ENCODE measurements at regions of chr22 and their contacts with region 1.

Region 1: DNA sequence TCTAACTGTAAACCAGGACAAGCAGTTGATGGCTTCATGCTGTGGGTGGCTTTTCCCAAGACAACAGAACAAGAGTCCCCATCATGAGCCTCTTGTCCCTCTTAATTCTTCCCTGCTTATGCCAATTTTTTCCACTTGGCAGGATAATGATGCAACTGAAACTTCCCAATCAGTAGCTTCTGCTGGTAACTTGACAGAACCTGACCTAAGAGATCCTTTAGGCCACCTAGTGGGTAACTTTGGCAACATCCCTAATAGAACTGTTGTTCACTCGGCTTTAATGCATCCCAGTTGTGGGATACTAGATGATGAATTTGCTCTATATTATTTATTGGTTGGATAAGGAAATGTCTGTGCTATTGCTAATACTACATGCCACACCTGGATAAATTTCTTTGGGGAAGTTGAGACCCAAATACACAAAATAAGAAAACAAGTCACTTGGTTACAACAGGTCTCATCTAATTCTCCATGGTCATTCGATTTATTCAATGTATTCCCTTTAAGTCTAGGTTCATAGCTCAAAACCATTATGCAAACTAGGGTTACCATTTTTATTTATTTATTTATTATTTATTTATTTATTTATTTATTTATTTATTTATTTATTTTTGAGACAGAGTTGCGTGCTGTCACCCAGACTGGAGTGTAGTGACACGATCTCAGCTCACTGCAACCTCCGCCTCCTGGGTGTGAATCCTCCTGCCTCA is 41.4 kb upstream of the NFAM1 start:
- DNase-seq: no peak
- H3K4me3 ChIP-seq: no peak overlapping the region
- H3K27ac ChIP-seq: no peak overlapping the region
- H3K4me1 ChIP-seq: 0 out of 7 replicates have a peak, but pooled peaks cover 0 to 1% (median 0%) of the 10 kb centered on the region in 4 experiments
- H3K27me3 ChIP-seq: no peaks in the 10 kb centered on the region
- CTCF ChIP-seq: peak in 2 of 3 experiments; percentile 64 to 77; a peak in 3 of 4 replicates
- EP300 ChIP-seq: 0 out of 3 replicates have a peak, but pooled peaks of 1 of the 2 experiments have one; percentile 7
- POLR2A ChIP-seq: no peak
- RAD21 ChIP-seq: peak; percentile 64 to 72

Region 2: GRCh38 chr22:42462016-42462415 is 11.6 kb before region 1 on chr22:
- CTCF ChIA-PET with region 1: interaction called, 30 read pairs
- POLR2A ChIA-PET with region 1: no interaction called
- DNase-seq: no peak
- H3K4me3 ChIP-seq: no peak overlapping the region
- H3K27ac ChIP-seq: no peak overlapping the region
- H3K4me1 ChIP-seq: peaks cover 4 to 13% (median 8%) of the 10 kb centered on the region in 4 experiments; a peak in 6 of 7 replicates
- H3K27me3 ChIP-seq: no peaks in the 10 kb centered on the region; a peak in 2 of 7 replicates
- CTCF ChIP-seq: no peak
- EP300 ChIP-seq: no peak
- POLR2A ChIP-seq: no peak
- RAD21 ChIP-seq: peak in 1 of 2 experiments; percentile 12; a peak in 1 of 4 replicates

Region 3: GRCh38 chr22:42484506-42484905 is 10.9 kb after region 1 on chr22:
- CTCF ChIA-PET with region 1: interaction called, 36 read pairs
- POLR2A ChIA-PET with region 1: interaction called, 7 read pairs
- DNase-seq: no peak
- H3K4me3 ChIP-seq: no peak overlapping the region
- H3K27ac ChIP-seq: no peak overlapping the region
- H3K4me1 ChIP-seq: no peaks in the 10 kb centered on the region
- H3K27me3 ChIP-seq: no peaks in the 10 kb centered on the region
- CTCF ChIP-seq: no peak
- EP300 ChIP-seq: no peak
- POLR2A ChIP-seq: no peak
- RAD21 ChIP-seq: no peak

Region 4: DNA sequence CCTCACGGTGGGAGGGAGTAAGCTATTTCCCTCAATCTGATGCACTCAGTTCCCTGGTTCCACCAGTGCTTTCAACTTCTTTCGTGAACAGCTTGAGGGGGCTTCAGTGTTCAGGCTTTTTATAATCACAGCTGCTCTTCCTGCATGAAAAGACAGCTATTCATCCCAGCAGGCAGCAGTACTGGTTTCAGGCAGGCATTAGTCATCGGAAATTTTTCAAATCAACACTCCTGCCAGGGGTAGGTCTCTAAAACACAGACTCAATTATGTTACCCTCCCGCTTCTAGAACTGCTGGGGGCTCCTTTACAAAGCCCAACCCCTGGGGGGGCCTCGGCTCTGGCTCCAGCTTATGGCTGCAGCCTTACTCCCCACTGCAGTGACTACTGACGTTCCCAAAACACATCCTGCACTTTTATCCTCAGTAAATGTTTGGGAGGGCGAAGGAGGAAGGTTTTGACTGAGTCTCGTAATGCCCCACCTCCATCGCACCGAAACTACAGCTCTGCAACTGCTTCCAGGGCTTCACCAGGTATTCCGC is 135.3 kb after region 1 on chr22:
- CTCF ChIA-PET with region 1: no interaction called
- POLR2A ChIA-PET with region 1: no interaction called
- DNase-seq: no peak
- H3K4me3 ChIP-seq: no peak overlapping the region
- H3K27ac ChIP-seq: no peak overlapping the region
- H3K4me1 ChIP-seq: peaks cover 6 to 8% (median 7%) of the 10 kb centered on the region in 4 experiments
- H3K27me3 ChIP-seq: no peaks in the 10 kb centered on the region
- CTCF ChIP-seq: no peak
- EP300 ChIP-seq: no peak
- POLR2A ChIP-seq: no peak
- RAD21 ChIP-seq: no peak

Measured in H1 (cell line).